IMR-90 (cell line): ENCODE measurements at regions of chr17 and their contacts with region 1.

Region 1: DNA sequence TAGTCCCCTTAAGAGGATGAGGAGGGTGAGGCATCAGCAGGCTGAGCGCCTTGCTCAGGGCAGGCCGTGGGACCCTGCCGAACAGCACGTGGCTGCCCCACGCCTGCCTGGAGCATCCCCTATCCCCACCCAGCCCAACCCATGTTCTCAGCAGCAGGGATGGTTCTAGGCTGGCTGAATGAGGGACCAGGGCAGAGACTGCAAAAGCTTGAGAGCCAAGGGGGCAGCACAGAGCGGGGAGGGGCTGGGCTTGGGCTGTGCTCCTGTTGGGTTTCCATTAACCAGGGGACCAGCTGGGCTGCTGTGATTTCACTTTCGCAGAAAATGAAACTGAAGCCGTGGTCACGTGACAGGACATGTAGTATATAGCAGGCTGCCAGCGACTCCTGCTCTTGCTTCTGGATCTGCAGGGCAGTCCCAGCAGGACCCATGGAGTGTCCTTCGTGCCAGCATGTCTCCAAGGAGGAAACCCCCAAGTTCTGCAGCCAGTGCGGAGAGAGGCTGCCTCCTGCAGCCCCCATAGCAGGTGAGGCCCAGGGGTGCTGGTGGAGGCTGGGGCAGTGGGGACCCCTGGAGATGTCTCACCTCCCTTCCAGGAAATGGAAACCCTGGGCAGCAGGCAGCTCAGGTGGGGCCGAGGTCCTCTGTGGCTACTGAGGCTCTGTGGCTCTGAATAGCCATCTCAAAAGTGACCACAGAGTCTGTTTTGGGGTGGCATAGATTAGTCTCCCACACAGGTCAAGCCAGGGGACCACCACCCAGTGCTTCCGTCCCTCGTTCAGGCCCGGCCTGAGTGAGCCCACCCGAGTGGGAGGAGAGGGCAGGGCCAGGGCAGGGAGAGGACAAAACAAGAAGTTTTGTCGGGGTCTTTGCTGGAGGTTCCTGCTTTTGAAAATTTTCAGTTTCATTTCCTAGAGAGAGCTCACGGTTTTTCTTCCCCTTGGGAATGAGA is 2.9 kb downstream of the RNF213 start:
- DNase-seq: peak; percentile 89
- ATAC-seq: peak; percentile 46
- H3K4me3 ChIP-seq: 0 out of 2 replicates have a peak overlapping the region, but pooled peaks have one; percentile 1
- H3K27ac ChIP-seq: peak overlapping the region; percentile 66
- H3K4me1 ChIP-seq: peaks cover 20% of the 10 kb centered on the region
- H3K27me3 ChIP-seq: no peaks in the 10 kb centered on the region
- CTCF ChIP-seq: peak; percentile 28; the same call in 1 of the 2 replicates
- POLR2A ChIP-seq: peak; percentile 44; the same call in 1 of the 2 replicates
- RAD21 ChIP-seq: peak; percentile 40

Region 2: DNA sequence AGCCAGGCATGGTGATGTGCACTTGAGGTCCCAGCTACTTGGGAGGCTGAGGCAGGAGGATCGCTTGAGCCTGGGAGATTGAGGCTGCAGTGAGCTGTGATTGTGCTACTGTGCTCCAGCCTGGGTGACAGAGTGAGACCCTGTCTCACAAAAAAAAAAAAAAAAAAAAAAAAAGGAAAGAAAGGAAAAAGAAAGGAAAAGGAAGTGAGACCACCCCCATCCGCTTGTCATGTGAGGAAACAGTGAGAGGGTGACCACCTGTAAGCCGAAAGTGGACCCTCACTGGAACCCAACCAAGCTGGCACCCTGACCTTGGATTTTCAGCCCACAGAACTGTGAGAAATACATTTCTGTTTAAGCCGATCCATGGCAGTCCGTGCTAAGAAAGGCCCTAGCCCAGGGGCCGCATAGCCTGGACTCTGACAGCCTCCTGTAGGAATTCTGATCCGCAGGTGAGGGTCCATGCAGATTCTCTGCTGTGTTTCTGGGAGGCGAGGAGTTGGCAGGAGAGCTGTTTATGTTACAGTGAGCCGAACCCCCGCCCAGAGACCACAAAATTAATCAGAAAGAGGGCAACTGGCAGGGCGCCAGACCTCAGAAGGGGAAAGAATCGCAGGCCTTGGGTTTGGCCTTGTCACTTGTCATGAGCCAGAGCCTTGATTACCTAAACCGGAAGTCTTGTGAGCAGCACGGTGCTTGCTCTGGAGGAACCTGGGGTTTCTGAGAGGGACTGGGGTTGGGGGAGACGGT is 44.3 kb before region 1 on chr17:
- CTCF ChIA-PET with region 1: no interaction called
- POLR2A ChIA-PET with region 1: no interaction called
- dilution Hi-C with region 1: no loop called
- in situ Hi-C with region 1: no loop called
- intact Hi-C with region 1: loop called (anchors 5 kb)
- DNase-seq: peak; percentile 80
- ATAC-seq: peak; percentile 18
- H3K4me3 ChIP-seq: peak overlapping the region; percentile 67
- H3K27ac ChIP-seq: peak overlapping the region; percentile 67
- H3K4me1 ChIP-seq: peaks cover 6% of the 10 kb centered on the region; the same call in 1 of the 2 replicates
- H3K27me3 ChIP-seq: no peaks in the 10 kb centered on the region
- CTCF ChIP-seq: no peak
- POLR2A ChIP-seq: no peak
- RAD21 ChIP-seq: no peak

Region 3: DNA sequence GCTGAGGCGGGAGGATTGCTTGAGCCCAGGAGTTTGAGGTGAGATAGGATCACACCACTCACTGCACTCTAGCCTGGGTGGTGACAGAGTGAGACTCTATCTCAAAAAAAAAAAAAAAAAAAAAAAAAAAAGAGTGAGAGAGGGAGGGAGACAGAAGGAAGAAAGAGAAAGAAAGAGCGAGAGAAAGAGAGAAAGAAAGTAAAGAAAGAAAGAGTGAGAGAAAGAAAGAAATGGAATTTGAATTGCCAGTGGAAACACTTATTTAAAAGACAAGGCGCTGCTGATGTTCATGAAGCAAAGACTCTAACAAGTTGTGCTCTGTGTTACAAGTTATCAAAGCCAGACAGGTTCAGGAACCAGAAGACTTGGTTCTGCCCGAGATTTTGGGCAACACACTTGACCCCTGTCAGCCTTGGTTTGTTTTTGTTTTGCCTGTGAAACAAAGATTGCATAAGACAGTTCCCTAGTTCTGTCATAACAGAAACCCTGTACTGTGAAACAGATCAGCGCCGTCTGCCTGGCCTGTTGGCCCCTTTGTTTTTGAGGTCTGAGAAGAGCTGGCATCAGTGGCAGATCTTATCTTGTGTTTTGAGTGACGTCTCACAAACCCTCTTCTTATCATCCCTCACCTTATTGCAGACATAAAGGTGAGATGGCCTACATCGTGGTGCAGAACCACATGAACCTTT is 96.0 kb after region 1 on chr17:
- CTCF ChIA-PET with region 1: no interaction called
- POLR2A ChIA-PET with region 1: no interaction called
- dilution Hi-C with region 1: no loop called
- in situ Hi-C with region 1: no loop called
- intact Hi-C with region 1: no loop called
- DNase-seq: no peak
- ATAC-seq: no peak; the same call in 1 of the 2 replicates
- H3K4me3 ChIP-seq: no peak overlapping the region
- H3K27ac ChIP-seq: no peak overlapping the region
- H3K4me1 ChIP-seq: no peaks in the 10 kb centered on the region; the same call in 1 of the 2 replicates
- H3K27me3 ChIP-seq: no peaks in the 10 kb centered on the region
- CTCF ChIP-seq: no peak
- POLR2A ChIP-seq: no peak
- RAD21 ChIP-seq: no peak

Region 4: DNA sequence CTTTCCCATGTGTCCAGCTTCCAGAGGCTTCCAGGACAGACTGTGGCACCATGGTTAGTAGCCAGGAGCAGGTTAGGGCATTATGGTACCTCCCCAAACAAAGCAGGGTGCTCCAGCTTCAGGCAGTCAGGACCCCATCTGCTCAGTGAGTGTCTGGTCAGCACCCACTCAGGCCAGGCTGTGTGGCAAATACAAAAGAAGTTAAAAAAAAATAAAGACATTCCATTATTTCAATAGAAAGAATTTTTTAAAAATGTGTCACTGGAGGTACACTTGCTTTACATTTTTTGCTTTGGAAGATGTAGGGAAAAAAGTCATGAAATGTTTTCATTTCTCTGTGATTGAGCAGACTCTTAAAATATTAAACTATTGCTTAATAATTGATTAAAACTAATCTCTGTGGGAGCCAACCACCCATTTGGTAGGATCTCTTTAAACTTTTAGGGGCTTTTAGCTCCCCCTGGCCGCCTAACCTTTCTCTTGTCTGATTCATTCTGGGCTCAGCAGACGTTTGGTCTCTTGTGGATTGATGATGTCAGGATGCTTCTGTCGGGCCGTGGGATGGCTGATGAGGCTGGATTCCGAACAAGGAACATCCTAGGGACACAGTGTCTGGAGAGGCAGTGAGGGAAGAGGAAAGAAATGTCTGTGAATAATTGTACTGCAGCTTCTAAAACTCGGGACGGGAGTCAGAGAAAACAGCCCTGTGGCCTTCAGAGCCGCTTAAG is 241.3 kb after region 1 on chr17:
- CTCF ChIA-PET with region 1: no interaction called
- POLR2A ChIA-PET with region 1: no interaction called
- dilution Hi-C with region 1: no loop called
- in situ Hi-C with region 1: no loop called
- intact Hi-C with region 1: no loop called
- DNase-seq: peak; percentile 85
- ATAC-seq: peak; percentile 70
- H3K4me3 ChIP-seq: no peak overlapping the region
- H3K27ac ChIP-seq: peak overlapping the region; percentile 11; the same call in 1 of the 2 replicates
- H3K4me1 ChIP-seq: peaks cover 18% of the 10 kb centered on the region
- H3K27me3 ChIP-seq: no peaks in the 10 kb centered on the region
- CTCF ChIP-seq: peak; percentile 28; the same call in 1 of the 2 replicates
- POLR2A ChIP-seq: peak; percentile 59
- RAD21 ChIP-seq: peak; percentile 26; the same call in 1 of the 2 replicates

Region 5: GRCh38 chr17:80720610-80721577 is 457.4 kb after region 1 on chr17:
- CTCF ChIA-PET with region 1: no interaction called
- POLR2A ChIA-PET with region 1: no interaction called
- dilution Hi-C with region 1: no loop called
- in situ Hi-C with region 1: no loop called
- intact Hi-C with region 1: no loop called
- DNase-seq: peak; percentile 86
- ATAC-seq: peak; percentile 18
- H3K4me3 ChIP-seq: no peak overlapping the region
- H3K27ac ChIP-seq: 0 out of 2 replicates have a peak overlapping the region, but pooled peaks have one; percentile 15
- H3K4me1 ChIP-seq: peaks cover 20% of the 10 kb centered on the region
- H3K27me3 ChIP-seq: no peaks in the 10 kb centered on the region
- CTCF ChIP-seq: no peak
- POLR2A ChIP-seq: no peak
- RAD21 ChIP-seq: peak; percentile 5; the same call in 1 of the 2 replicates